Activated CD8-positive, alpha-beta T cell treated with anti-CD3 and anti-CD28 coated beads, Interleukin-2, amount 10 ng/mL, durations not matched to agents 7 days and 5 days (primary cell): ENCODE measurements at regions of chr3 and their contacts with region 1.

Region 1: GRCh38 chr3:10758304-10759061 is 57.5 kb upstream of the SLC6A11 start:
- DNase-seq: peak; percentile 59
- ATAC-seq: peak; percentile 84
- H3K4me3 Mint-ChIP-seq: no peak overlapping the region
- H3K27ac Mint-ChIP-seq: no peak overlapping the region
- H3K4me1 Mint-ChIP-seq: no peaks in the 10 kb centered on the region
- H3K27me3 Mint-ChIP-seq: peaks cover 5% of the 10 kb centered on the region

Region 2: DNA sequence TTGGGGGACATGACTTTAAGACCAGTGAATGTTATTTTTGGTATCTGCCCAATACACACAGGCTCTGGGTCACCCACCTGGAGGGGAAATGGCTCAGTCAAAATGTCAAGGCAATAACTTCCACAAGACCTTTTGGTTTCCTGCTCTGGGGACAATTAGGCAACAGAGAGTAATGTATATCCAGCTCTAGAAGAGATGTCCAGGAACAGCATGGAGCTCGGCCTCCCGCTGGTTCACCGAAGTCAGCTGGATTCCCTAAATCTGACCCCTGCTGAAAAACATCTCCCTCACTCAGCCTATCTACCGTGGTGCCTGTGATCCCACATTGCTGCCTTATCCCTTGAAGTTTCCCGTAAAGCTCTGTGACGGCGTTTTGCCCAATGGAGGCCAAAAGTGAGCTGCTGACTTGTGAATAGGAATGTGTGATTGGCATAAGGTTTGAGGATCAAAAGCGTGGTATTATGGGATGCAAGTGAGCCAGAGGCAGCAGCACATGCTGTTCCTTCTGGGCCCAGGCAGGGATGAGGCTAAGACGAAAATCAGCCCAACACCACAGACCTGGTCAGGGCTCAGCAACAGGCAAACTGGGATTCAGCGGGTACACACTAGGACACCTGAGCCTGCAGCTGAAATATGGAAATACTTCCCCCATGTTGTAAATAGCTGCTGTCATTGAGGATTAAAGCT is 10.4 kb after region 1 on chr3:
- CTCF ChIA-PET with region 1: interaction called, 10 read pairs
- POLR2A ChIA-PET with region 1: no interaction called
- DNase-seq: no peak
- ATAC-seq: no peak
- H3K4me3 Mint-ChIP-seq: no peak overlapping the region
- H3K27ac Mint-ChIP-seq: no peak overlapping the region
- H3K4me1 Mint-ChIP-seq: no peaks in the 10 kb centered on the region
- H3K27me3 Mint-ChIP-seq: no peaks in the 10 kb centered on the region

Region 3: GRCh38 chr3:10783357-10784351 is 25.2 kb after region 1 on chr3:
- CTCF ChIA-PET with region 1: interaction called, 10 read pairs
- POLR2A ChIA-PET with region 1: no interaction called
- DNase-seq: peak; percentile 47
- ATAC-seq: peak; percentile 55
- H3K4me3 Mint-ChIP-seq: no peak overlapping the region
- H3K27ac Mint-ChIP-seq: no peak overlapping the region
- H3K4me1 Mint-ChIP-seq: peaks cover 7% of the 10 kb centered on the region
- H3K27me3 Mint-ChIP-seq: peaks cover 18% of the 10 kb centered on the region

Region 4: DNA sequence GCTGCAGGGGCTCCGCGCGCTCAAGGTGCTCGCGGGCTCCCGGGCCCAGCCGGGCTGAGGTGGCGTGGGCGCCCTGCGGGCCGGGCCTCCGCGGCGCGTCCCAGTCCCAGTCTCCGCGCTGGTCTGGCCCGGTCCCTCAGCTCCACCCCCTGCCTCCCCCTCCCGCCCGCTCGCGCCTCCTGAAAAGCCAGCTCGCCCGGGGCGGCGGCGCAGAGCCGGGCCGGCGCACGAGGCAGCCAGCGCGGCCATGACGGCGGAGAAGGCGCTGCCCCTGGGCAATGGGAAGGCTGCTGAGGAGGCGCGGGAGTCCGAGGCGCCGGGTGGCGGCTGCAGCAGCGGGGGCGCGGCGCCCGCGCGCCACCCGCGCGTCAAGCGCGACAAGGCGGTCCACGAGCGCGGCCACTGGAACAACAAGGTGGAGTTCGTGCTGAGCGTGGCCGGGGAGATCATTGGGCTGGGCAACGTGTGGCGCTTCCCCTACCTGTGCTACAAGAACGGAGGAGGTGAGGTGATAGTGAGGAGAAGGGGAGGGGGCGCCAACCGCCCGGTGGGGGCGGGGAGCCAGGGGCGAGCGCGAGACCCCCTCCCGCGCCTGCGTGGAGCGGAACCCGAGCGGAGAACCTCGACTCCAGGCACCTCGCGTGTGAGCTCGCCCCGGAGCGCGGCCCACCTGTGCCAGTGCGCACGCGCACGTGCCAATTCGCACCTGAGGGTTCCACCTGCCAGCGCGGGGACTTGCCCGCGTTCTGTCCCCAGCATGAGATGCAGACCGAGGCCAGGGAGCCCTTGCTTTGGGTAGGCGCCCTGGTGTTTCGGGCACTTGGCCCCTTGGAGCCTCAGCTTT is 57.8 kb after region 1 on chr3 and contains the start of gene SLC6A11:
- CTCF ChIA-PET with region 1: no interaction called
- POLR2A ChIA-PET with region 1: no interaction called
- DNase-seq: no peak
- ATAC-seq: no peak
- H3K4me3 Mint-ChIP-seq: no peak within 1 kb of the TSS
- H3K27ac Mint-ChIP-seq: no peak within 1 kb of the TSS
- H3K4me1 Mint-ChIP-seq: no peaks in the 10 kb centered on the region
- H3K27me3 Mint-ChIP-seq: peaks cover 41% of the 10 kb centered on the region
- total RNA-seq, gene SLC6A11: not detected

Region 5: GRCh38 chr3:10941972-10942371 is 183.5 kb after region 1 on chr3:
- CTCF ChIA-PET with region 1: interaction called, 14 read pairs
- POLR2A ChIA-PET with region 1: no interaction called
- DNase-seq: peak; percentile 43
- ATAC-seq: no peak
- H3K4me3 Mint-ChIP-seq: no peak overlapping the region
- H3K27ac Mint-ChIP-seq: no peak overlapping the region
- H3K4me1 Mint-ChIP-seq: no peaks in the 10 kb centered on the region
- H3K27me3 Mint-ChIP-seq: no peaks in the 10 kb centered on the region